ENCODE measurements at regions of chr11 and their contacts with region 1.

Region 1: GRCh38 chr11:72585762-72586311 is 88.4 kb downstream of the PDE2A start:
- DNase-seq: peak; percentile 77
- ATAC-seq: peak; percentile 50
- H3K4me3 Mint-ChIP-seq: peak overlapping the region; percentile 78
- H3K27ac Mint-ChIP-seq: no peak overlapping the region
- H3K4me1 Mint-ChIP-seq: peaks cover 21% of the 10 kb centered on the region
- H3K27me3 Mint-ChIP-seq: peaks cover 91% of the 10 kb centered on the region
- CTCF ChIP-seq: peak; percentile 97

Region 2: DNA sequence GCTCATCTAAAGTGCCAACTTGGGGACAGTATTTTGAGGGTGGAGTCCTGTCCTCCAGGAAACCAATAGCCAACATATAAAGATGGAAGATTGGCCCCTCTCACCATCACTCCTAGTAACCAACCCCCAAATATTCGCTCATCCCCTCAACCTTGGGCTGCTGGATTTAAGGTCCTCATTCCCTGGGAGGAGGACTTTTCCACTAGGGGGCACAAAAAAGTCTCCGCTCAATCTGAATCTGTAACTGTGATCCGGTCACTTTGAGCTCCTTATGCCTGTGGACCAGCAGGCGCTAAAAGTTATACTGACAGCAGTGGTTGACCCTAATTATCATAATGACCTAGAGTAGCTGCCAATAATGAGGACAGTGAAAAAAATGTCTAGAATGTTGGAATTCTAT is 131.0 kb before region 1 on chr11:
- CTCF ChIA-PET with region 1: interaction called, 15 read pairs
- POLR2A ChIA-PET with region 1: no interaction called
- DNase-seq: peak; percentile 17
- ATAC-seq: peak; percentile 67; the same call in 1 of the 2 replicates
- H3K4me3 Mint-ChIP-seq: no peak overlapping the region
- H3K27ac Mint-ChIP-seq: no peak overlapping the region
- H3K4me1 Mint-ChIP-seq: 0 out of 2 replicates have a peak, but pooled peaks cover 2% of the 10 kb centered on the region
- H3K27me3 Mint-ChIP-seq: peaks cover 8% of the 10 kb centered on the region
- CTCF ChIP-seq: no peak

Region 3: DNA sequence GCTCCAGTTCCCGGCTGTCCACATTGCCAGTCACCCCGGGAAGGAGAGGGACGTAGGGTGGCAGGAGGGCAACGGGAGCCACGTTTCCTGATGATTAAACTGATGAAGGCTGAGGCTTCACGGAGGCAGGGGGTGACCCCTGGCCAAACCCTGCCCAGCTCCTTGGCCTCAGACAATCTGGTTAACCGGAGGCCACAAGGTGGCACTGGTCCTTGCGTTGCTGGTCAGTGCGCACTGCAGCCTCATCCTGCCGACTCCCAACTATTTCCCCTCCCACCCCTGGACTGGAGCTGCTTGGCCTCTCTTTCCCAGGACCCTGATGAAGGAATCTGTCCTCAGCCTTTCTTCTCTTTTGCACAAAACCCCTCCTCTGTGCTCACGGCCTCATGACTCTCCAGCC is 13.1 kb after region 1 on chr11:
- CTCF ChIA-PET with region 1: interaction called, 149 read pairs
- POLR2A ChIA-PET with region 1: interaction called, 4 read pairs
- DNase-seq: peak; percentile 68
- ATAC-seq: peak; percentile 75
- H3K4me3 Mint-ChIP-seq: no peak overlapping the region
- H3K27ac Mint-ChIP-seq: no peak overlapping the region
- H3K4me1 Mint-ChIP-seq: peaks cover 35% of the 10 kb centered on the region
- H3K27me3 Mint-ChIP-seq: peaks cover 13% of the 10 kb centered on the region
- CTCF ChIP-seq: peak; percentile 15; the same call in 1 of the 2 replicates

Region 4: DNA sequence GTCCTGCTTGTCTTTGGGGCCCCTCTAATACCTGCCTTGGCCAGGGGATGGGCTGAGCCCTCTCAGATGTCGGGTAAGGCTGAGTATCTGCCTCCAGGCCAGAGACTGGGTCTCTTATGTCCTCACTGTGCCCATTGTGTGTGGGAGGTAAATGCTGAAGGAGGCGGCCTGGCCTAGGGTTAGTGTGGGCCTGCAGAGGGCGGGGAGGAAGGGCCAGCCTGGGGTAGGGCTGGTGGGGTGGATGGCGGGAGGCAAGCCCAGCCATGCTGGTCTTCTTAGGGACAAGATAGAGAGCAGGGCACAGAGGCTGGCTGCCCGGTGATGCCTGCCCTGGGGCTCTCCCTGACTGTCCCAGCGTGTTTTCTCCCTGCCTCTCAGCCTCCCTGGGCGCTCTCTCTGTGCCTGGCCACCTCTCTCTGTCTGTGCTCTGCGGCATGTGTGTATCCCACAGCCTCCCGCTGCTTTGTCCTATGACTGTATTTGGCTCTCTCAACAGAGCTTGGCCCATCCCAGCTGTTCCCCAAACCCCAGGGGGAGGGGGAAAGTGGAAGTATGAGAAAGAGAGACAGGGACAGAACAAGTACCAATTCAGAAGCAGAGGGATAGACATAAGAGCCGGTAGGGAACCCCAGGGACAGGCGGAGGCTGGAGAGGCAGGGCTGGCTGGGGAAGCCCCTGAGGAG is 31.4 kb after region 1 on chr11:
- CTCF ChIA-PET with region 1: interaction called, 15 read pairs
- POLR2A ChIA-PET with region 1: no interaction called
- DNase-seq: no peak
- ATAC-seq: peak; percentile 26
- H3K4me3 Mint-ChIP-seq: no peak overlapping the region
- H3K27ac Mint-ChIP-seq: no peak overlapping the region
- H3K4me1 Mint-ChIP-seq: peaks cover 11% of the 10 kb centered on the region
- H3K27me3 Mint-ChIP-seq: peaks cover 13% of the 10 kb centered on the region
- CTCF ChIP-seq: no peak

Region 5: GRCh38 chr11:72635309-72635915 is 49.6 kb after region 1 on chr11:
- CTCF ChIA-PET with region 1: interaction called, 60 read pairs
- POLR2A ChIA-PET with region 1: interaction called, 5 read pairs
- DNase-seq: no peak
- ATAC-seq: no peak
- H3K4me3 Mint-ChIP-seq: no peak overlapping the region
- H3K27ac Mint-ChIP-seq: no peak overlapping the region
- H3K4me1 Mint-ChIP-seq: peaks cover 38% of the 10 kb centered on the region
- H3K27me3 Mint-ChIP-seq: peaks cover 5% of the 10 kb centered on the region
- CTCF ChIP-seq: no peak

Region 6: GRCh38 chr11:72652873-72653630 is 67.2 kb after region 1 on chr11:
- CTCF ChIA-PET with region 1: interaction called, 13 read pairs
- POLR2A ChIA-PET with region 1: no interaction called
- DNase-seq: peak; percentile 78
- ATAC-seq: peak; percentile 94
- H3K4me3 Mint-ChIP-seq: no peak overlapping the region
- H3K27ac Mint-ChIP-seq: 0 out of 2 replicates have a peak overlapping the region, but pooled peaks have one; percentile 1
- H3K4me1 Mint-ChIP-seq: peaks cover 13% of the 10 kb centered on the region
- H3K27me3 Mint-ChIP-seq: peaks cover 8% of the 10 kb centered on the region
- CTCF ChIP-seq: no peak